SK-N-SH (cell line): ENCODE measurements at regions of chr12 and their contacts with region 1.

Region 1: DNA sequence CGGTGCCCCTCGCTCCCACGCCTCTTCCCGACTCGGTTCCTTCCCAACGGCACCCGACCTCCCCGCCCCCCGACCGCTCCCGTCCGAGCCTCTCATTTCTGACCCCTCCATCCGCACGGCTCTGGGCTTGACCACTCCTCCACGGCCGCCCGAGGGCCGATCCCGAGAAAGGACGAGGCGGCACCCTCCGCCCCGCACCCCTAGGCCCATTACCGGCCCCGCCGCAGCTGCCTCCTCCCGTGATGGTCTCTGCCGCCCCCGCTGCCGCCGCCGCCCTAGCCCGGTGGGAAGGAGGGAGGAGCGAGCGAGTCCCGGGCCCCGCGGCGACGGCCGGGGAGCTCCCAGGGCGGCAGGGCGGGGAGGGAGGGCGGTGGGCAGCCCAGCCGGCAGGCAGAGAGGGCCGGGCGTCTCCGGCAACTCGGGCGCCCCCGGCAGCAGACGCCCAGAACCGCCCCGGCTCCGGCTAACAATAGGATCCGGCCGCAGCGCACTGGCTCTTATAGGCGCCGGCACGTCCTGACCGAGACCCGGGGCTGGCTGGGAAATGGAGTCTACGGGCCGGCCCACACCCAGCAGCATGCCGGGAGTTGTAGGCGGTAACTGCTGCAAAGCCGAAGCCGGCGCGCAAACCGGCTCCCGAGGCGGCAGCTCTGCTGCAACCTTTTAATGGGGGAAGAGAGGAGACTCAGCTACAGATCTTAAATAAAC is at the start of gene CSRNP2:
- DNase-seq: peak; percentile 99
- H3K4me3 ChIP-seq: peak within 1 kb of the TSS; percentile 83 to 97
- H3K27ac ChIP-seq: peak within 1 kb of the TSS; percentile 86 to 90
- H3K4me1 ChIP-seq: peaks cover 6 to 7% of the 10 kb centered on the region in 2 experiments; a peak in 3 of 4 replicates
- H3K27me3 ChIP-seq: no peaks in the 10 kb centered on the region
- CTCF ChIP-seq: no peak
- EP300 ChIP-seq: peak in 1 of 2 experiments; percentile 10; a peak in 1 of 4 replicates
- RAD21 ChIP-seq: no peak
- polyA plus RNA-seq, gene CSRNP2: 18.7 and 22.7 TPM in 2 replicates

Region 2: GRCh38 chr12:50922820-50923219 is 160.5 kb before region 1 on chr12:
- CTCF ChIA-PET with region 1: no interaction called
- POLR2A ChIA-PET with region 1: no interaction called
- DNase-seq: peak; percentile 36
- H3K4me3 ChIP-seq: peak overlapping the region in 1 of 2 experiments; percentile 8; a peak in 1 of 4 replicates
- H3K27ac ChIP-seq: peak overlapping the region; percentile 43 to 96; a peak in 3 of 4 replicates
- H3K4me1 ChIP-seq: peaks cover 11 to 24% of the 10 kb centered on the region in 2 experiments
- H3K27me3 ChIP-seq: no peaks in the 10 kb centered on the region
- CTCF ChIP-seq: no peak
- EP300 ChIP-seq: peak; percentile 20 to 91; a peak in 3 of 4 replicates
- RAD21 ChIP-seq: peak; percentile 27; the same call in 1 of the 2 replicates

Region 3: DNA sequence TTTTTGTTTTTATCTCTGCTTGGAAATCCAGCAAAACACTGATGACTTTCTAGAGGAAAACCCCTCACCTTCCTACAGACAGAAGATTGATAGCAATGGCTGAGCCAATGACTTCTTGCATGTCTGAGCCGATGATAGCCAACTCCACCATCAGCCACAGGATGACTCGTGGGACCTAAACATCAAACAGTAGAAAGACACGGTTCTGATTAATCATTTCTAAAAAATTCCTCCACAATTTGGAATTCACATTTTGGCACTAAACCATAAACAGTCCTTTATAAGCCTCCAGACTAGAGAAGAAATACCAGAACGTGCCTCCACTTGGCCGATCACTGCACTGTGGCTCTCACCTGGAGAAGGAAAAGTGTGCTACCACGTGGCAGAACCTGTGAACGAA is 83.0 kb before region 1 on chr12:
- CTCF ChIA-PET with region 1: no interaction called
- POLR2A ChIA-PET with region 1: no interaction called
- DNase-seq: no peak
- H3K4me3 ChIP-seq: no peak overlapping the region
- H3K27ac ChIP-seq: no peak overlapping the region
- H3K4me1 ChIP-seq: no peaks in the 10 kb centered on the region
- H3K27me3 ChIP-seq: no peaks in the 10 kb centered on the region
- CTCF ChIP-seq: no peak
- EP300 ChIP-seq: no peak
- RAD21 ChIP-seq: no peak

Region 4: DNA sequence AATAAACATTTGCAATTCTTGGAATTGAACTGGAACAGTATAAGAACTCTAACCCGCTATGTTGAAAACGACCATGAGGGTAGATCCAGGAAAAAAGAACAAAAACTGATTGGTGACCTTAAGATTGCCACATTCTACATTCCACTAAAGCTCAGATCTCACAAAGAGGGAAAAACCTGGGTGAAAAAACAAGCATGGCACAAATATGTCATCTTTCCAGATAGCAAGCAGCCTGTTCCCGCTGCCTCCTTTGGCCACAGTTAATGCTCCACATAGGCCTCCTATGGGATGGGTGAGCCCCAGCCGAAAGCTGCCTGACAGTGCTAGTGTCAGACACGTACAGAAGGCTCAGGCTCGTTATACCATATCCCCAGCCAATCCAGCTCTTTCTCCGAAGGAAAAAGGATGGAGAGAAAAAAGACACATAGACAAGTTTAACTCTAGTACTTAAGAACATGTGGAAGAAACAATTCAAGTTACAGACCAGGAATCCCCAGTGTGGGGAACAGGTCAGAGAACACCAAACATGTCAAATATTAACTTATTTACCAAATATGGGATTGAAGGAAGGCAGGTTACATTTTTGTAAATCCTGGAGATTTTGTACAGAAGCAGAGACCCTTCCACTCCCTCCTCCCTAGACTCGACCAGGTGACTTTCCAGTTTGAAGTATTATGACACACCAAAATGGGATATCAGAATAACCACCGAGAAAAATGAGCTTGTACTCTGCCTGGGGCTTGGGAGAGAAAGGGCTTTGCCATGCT is 20.5 kb before region 1 on chr12:
- CTCF ChIA-PET with region 1: no interaction called
- POLR2A ChIA-PET with region 1: interaction called, 16 read pairs
- DNase-seq: no peak
- H3K4me3 ChIP-seq: no peak overlapping the region
- H3K27ac ChIP-seq: no peak overlapping the region
- H3K4me1 ChIP-seq: no peaks in the 10 kb centered on the region
- H3K27me3 ChIP-seq: no peaks in the 10 kb centered on the region
- CTCF ChIP-seq: no peak
- EP300 ChIP-seq: no peak
- RAD21 ChIP-seq: no peak

Region 5: GRCh38 chr12:51210690-51211395 is 127.6 kb after region 1 on chr12:
- CTCF ChIA-PET with region 1: no interaction called
- POLR2A ChIA-PET with region 1: no interaction called
- DNase-seq: no peak
- H3K4me3 ChIP-seq: no peak overlapping the region
- H3K27ac ChIP-seq: no peak overlapping the region
- H3K4me1 ChIP-seq: no peaks in the 10 kb centered on the region
- H3K27me3 ChIP-seq: no peaks in the 10 kb centered on the region
- CTCF ChIP-seq: no peak
- EP300 ChIP-seq: no peak
- RAD21 ChIP-seq: no peak